Ascending aorta (tissue), 2 donors: ENCODE measurements at regions of chr1 and their contacts with region 1.

Region 1: DNA sequence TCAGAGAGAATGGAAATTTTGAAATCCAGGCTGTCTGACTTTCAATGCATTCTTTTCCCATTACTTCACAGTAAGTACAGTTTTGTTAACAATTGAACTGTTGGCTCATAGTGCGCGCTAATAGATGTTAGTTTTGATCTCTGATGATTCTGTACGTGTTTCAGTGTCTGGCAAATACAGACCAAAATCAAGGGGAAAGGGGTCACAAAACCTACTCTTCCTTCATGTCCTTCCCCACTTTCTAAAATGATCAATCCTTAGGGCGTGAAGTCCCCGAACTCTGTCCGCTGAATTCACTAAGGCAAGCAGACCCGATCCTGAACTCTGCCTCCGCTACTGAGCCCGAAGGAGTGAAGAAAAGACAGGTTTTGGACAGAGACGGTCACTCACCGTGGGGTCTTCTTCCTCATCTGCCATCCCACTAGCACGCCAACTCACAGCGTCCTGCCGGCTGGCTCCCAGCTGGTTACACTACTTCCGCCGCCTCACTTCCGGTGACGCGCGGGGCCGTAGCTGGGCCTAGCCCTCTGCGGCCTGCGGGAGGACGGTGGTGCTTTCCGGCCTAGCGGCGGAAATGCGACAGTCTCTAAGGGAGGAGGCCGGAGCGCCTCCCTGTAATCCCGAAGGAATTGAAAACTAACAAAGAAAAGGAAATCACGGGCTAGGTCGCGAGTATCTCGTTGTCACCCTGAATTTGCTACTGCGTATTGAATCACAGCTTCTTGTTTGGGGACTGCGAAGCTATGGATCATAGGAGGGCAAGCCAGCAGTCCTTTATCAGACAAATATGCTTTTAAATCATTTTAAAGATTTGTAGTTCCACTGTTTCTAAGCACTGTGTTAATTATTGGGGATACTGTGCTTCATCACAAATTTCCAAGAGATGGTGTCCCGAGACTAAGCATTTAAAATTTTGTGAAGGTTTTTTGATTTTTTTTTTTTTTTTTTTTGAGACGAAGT is at the start of gene TAF13:
- DNase-seq: peak; percentile 76 to 98
- H3K4me3 ChIP-seq: peak within 1 kb of the TSS; percentile 60 to 76
- H3K27ac ChIP-seq: peak within 1 kb of the TSS; percentile 82 to 89
- H3K4me1 ChIP-seq: peaks cover 4 to 18% of the 10 kb centered on the region in 2 donors
- H3K27me3 ChIP-seq: no peaks in the 10 kb centered on the region
- CTCF ChIP-seq: peak in 2 of 3 experiments; percentile 38 to 45
- total RNA-seq, gene TAF13: 9.3 TPM

Region 2: DNA sequence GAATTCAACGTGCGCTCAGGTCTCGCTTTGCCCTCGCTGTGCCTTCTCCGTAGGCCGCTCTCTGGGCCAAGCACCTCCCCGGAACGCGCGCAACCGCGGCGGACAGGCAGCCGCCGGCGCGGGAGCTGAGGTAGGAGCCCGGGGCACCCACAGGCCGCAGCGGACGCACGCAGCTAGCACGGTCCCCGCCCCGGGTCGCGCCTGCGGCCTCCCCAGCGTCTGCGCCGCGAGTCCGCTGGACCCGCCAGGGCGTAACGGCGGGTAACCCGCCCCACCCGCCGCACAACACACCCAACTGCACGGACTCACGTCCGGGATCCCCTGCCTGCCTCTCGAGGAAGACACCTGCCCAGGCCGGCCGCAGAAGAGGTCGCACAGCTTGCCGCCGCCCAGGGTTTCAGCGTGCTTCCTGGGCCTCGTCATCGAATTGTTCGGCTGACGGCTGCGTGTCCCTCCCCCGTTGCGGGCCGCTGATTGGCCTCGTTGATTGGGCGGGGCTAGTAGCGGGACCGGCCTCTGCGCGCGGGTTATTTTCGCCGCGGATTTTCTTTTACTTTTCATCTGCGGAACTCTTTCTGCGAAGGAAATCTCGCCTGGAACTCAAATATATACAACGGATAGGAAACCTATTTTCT is 112.6 kb before region 1 on chr1 and contains the start of gene CLCC1:
- intact Hi-C with region 1: loop called (anchors 2 kb)
- DNase-seq: peak; percentile 71 to 96
- H3K4me3 ChIP-seq: peak within 1 kb of the TSS; percentile 76 to 91
- H3K27ac ChIP-seq: peak within 1 kb of the TSS; percentile 93 to 97
- H3K4me1 ChIP-seq: peaks cover 11 to 13% of the 10 kb centered on the region in 2 donors
- H3K27me3 ChIP-seq: no peaks in the 10 kb centered on the region
- CTCF ChIP-seq: no peak
- total RNA-seq, gene CLCC1: 18.1 TPM

Region 3: GRCh38 chr1:109041621-109042468 is 34.0 kb before region 1 on chr1 and contains the start of gene WDR47:
- intact Hi-C with region 1: loop called (anchors 1 kb)
- DNase-seq: peak; percentile 84 to 97
- H3K4me3 ChIP-seq: peak within 1 kb of the TSS; percentile 78 to 94
- H3K27ac ChIP-seq: peak within 1 kb of the TSS; percentile 83 to 86
- H3K4me1 ChIP-seq: peaks cover 0 to 5% of the 10 kb centered on the region in 2 donors
- H3K27me3 ChIP-seq: no peaks in the 10 kb centered on the region
- CTCF ChIP-seq: no peak
- total RNA-seq, gene WDR47: 11.8 TPM

Region 4: DNA sequence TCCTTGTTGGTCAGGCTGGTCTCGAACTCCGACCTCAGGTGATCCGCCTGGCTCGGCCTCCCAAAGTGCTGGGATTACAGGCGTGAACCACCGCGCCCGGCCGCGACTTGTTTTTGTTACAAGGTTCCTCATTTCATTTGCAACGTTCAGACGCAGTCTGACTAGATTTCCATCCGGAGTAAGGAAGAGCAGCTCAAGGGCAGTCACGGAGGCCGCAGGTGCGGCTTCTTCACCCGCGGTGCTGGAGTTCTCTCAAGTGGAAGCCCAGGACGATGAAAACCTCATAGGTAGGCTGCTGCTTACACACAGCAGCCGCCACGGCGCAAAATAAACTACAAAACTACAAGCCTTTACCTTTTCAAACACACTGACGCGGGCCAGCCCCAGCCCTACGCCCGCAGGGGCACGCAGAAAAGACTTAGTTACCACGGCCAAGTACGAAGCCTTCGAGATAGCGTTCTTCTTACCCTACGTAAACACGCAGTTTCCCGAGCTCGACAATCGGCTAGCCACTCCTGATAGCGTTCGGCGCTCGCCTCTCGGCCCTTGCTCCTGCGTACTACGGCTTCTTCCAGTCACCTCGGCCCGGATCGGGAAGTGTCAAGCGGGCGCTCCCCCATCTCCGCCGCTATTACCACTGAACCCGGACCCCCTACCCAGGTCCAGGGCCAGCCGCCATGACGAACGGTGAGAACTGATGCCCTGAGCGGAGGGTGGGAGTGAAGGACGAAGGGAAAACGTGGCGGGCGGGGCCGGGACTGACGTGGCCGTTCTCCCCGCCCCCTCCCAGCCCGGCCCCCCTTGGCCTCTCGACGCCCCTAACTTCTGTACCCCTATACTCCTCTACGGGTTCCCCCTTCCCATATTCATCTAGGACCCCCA is 14.6 kb after region 1 on chr1 and contains the start of gene TMEM167B:
- intact Hi-C with region 1: loop called (anchors 2 kb)
- DNase-seq: peak; percentile 64 to 95
- H3K4me3 ChIP-seq: peak within 1 kb of the TSS; percentile 61 to 72
- H3K27ac ChIP-seq: peak within 1 kb of the TSS; percentile 91 to 95
- H3K4me1 ChIP-seq: peaks cover 5 to 29% of the 10 kb centered on the region in 2 donors
- H3K27me3 ChIP-seq: no peaks in the 10 kb centered on the region
- CTCF ChIP-seq: no peak
- total RNA-seq, gene TMEM167B: 20.5 TPM

Region 5: GRCh38 chr1:109099938-109100773 is 24.3 kb after region 1 on chr1:
- intact Hi-C with region 1: loop called (anchors 1 kb)
- DNase-seq: peak; percentile 87 to 99
- H3K4me3 ChIP-seq: peak overlapping the region; percentile 79 to 90
- H3K27ac ChIP-seq: peak overlapping the region; percentile 96
- H3K4me1 ChIP-seq: peaks cover 0 to 2% of the 10 kb centered on the region in 2 donors
- H3K27me3 ChIP-seq: no peaks in the 10 kb centered on the region
- CTCF ChIP-seq: peak; percentile 68 to 92 (median 87)

Region 6: DNA sequence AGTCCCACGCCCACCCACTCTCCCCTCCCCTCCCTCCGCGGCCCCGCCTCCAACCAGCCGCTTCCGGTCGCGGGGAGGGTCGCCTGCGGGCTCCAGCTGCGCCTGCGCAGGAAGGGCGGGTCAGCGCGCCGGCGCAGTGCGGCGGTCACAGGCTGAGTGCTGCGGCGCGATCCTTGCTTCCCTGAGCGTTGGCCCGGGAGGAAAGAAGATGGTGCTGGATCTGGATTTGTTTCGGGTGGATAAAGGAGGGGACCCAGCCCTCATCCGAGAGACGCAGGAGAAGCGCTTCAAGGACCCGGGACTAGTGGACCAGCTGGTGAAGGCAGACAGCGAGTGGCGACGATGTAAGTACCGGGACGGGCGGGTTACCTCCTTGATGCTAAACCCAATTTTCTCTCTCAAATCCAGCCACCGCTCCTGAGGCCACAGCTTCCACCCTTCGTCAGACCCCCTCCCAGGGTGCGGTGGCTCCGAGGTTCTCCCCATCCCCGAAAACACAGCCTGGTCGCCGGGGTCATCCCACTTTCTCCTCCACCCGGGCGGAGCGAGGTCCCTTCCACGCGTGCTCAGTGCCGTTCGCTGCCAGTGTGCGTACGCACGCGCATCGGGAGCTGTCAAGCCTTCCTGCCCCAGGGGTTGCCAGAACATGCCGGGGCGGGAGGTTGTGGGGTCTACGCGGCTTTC is 138.1 kb after region 1 on chr1 and contains the start of gene SARS1:
- intact Hi-C with region 1: loop called (anchors 1 kb)
- DNase-seq: peak; percentile 37 to 91
- H3K4me3 ChIP-seq: peak within 1 kb of the TSS; percentile 79 to 82
- H3K27ac ChIP-seq: peak within 1 kb of the TSS; percentile 87 to 94
- H3K4me1 ChIP-seq: peaks cover 10 to 22% of the 10 kb centered on the region in 2 donors
- H3K27me3 ChIP-seq: no peaks in the 10 kb centered on the region
- CTCF ChIP-seq: no peak
- total RNA-seq, gene SARS1: 134 TPM

Region 7: GRCh38 chr1:109397538-109398342 is 321.9 kb after region 1 on chr1 and contains the start of gene SORT1:
- intact Hi-C with region 1: loop called (anchors 5 kb)
- DNase-seq: peak; percentile 66 to 93
- H3K4me3 ChIP-seq: peak within 1 kb of the TSS; percentile 77 to 83
- H3K27ac ChIP-seq: peak within 1 kb of the TSS; percentile 90 to 91
- H3K4me1 ChIP-seq: peaks cover 0 to 11% of the 10 kb centered on the region in 2 donors
- H3K27me3 ChIP-seq: no peaks in the 10 kb centered on the region
- CTCF ChIP-seq: peak in 2 of 3 experiments; percentile 3 to 44
- total RNA-seq, gene SORT1: 111 TPM